Aorta (tissue), 5 donors: ENCODE measurements at regions of chr4 and their contacts with region 1.

Region 1: DNA sequence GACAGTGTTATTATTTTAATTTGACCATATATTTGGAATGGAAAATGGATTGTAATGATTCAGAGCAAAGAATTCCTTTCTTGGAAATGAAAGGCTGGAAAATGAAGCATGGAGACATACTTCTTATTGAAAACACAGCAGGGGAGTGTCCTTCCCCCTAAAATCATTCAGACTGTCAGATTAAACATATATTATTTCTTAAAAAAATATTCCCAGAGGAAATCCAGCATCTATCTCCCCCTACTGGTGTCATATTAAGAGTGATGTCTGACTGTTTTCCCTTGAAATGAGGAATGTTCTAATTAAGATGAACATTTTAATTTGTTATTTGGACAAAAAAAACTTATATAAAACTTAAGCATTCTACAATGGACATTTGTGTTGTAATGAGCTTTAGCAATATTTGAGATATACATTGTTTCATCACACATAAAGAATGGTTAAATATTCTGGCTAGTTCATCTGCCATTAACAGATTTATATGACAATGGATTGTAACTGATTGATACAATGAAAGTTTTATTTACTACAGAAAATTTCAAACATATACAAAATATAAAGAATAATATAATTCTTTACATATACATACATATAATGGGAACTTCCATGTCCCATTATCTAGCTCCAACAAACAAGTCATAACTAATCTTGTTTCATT is 264.6 kb downstream of the SPRY1 start:
- DNase-seq: no peak
- ATAC-seq: no peak
- H3K4me3 ChIP-seq: no peak overlapping the region
- H3K27ac ChIP-seq: no peak overlapping the region
- H3K4me1 ChIP-seq: peaks cover 0 to 3% of the 10 kb centered on the region in 2 donors
- H3K27me3 ChIP-seq: no peaks in the 10 kb centered on the region

Region 2: DNA sequence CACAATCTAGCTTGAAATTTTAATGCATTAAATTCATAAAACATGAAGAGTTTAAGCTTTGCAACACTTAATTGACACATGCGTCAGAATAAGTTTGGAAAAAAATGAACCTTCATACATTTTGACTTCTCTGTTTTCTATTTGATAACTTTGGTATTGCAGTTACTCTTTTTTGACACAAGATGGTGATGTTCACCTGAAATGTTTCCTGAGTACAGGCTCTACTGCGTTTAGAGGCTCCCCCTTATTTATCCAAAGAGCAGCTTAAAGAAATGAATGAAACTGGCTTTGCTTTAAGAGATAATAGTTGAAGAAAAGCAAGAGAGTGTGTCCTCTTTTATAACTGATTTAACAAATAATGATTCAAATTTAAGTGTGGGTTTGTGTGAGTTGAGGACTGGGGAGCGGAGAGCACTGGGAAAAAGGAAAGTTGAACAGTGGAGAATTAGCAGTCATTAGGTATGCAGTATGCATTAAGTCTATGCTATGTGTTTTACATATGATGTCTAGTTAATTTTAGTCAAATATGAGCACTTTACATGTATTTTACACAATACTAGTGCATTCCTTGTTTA is 558.2 kb before region 1 on chr4:
- intact Hi-C with region 1: loop called (anchors 10 kb)
- DNase-seq: no peak
- ATAC-seq: peak; percentile 74
- H3K4me3 ChIP-seq: no peak overlapping the region
- H3K27ac ChIP-seq: no peak overlapping the region
- H3K4me1 ChIP-seq: no peaks in the 10 kb centered on the region
- H3K27me3 ChIP-seq: no peaks in the 10 kb centered on the region

Region 3: DNA sequence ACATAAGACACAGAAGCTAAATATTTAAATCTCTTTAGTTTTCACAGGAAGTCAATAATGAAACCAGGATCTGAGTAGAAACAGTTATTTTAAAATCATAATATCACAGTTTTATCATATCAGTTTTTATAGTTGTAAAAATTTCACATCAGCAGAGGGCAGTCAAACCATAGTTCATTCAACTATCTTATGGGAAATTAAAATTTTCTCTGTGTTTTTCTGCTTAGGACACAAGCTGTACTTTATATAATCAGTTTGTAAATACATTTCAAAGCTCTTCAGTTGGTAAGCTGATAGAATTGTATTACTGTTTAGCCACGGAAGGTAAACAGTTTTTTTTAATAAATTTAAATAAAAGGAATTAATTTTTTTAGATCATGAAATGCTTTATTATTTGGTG is 534.0 kb before region 1 on chr4:
- intact Hi-C with region 1: loop called in 1 of 2 experiments (anchors 5 kb)
- DNase-seq: no peak
- ATAC-seq: no peak
- H3K4me3 ChIP-seq: no peak overlapping the region
- H3K27ac ChIP-seq: no peak overlapping the region
- H3K4me1 ChIP-seq: no peaks in the 10 kb centered on the region
- H3K27me3 ChIP-seq: no peaks in the 10 kb centered on the region

Region 4: DNA sequence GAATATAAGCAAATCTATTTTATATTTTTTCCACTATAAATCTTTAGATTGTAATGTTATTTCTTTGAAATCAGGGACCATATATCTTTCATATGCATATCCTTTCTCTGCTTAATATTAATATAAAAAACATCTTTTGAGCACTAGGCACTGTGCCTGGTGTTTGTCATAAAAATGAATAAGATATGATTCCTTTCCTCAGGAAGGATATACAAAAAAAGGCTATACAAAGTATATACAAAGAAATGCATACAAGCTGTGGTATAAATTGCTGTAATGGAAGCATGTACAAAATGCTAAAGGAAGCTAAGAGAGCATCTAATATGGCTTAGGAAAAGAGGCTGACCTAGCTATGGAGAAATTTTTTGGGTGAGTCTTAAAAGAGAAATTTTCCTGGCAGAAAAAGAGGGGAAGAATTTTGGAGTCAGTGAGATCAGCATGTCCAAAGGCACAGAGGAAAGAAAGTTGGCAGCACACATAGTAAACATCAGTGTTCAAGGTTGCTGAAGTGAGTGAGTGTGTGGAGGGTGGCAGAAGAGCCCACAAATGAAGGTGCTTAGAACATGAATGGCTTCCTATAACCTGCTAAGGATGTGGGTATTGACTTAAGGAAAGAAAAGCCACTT is 235.3 kb after region 1 on chr4:
- intact Hi-C with region 1: no loop called
- DNase-seq: no peak
- ATAC-seq: peak; percentile 52
- H3K4me3 ChIP-seq: no peak overlapping the region
- H3K27ac ChIP-seq: no peak overlapping the region
- H3K4me1 ChIP-seq: peaks cover 2 to 5% of the 10 kb centered on the region in 2 donors
- H3K27me3 ChIP-seq: no peaks in the 10 kb centered on the region